ENCODE measurements at regions of chr1 and their contacts with region 1.

Region 1: DNA sequence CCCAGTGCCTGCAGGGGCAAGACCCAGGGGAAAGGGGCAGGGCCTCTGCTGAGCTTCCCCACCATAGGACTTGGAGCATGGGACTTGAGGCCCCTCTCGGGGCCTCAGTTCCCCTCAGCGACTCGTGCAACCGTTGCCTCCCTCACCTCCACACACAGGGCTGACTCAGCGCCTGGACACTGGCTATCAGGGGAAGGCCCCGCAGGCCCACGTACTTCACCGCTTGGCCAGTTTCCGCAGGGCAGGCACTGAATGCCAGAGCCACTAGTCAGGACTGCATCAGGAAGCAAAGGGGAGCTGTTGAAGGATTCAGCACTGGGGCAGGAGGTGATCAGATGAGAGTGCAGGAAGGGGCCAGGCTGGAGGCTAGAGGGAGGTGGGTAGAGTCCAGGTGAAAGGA is 15.5 kb upstream of the FAM131C start:
- DNase-seq: no peak
- ATAC-seq: no peak
- H3K4me3 ChIP-seq: no peak overlapping the region
- H3K27ac ChIP-seq: peak overlapping the region in 4 of 12 donors; percentile 28 to 42 (median 32)
- H3K4me1 ChIP-seq: peaks cover 0 to 26% (median 12%) of the 10 kb centered on the region in 12 donors
- H3K27me3 ChIP-seq: no peaks in the 10 kb centered on the region
- CTCF ChIP-seq: no peak
- POLR2A ChIP-seq: no peak

Region 2: GRCh38 chr1:16122916-16123315 is 33.9 kb after region 1 on chr1:
- intact Hi-C with region 1: loop called in 2 of 10 experiments (anchors 5 kb)
- DNase-seq: peak in 1 of 5 donors; percentile 11
- ATAC-seq: no peak
- H3K4me3 ChIP-seq: no peak overlapping the region
- H3K27ac ChIP-seq: no peak overlapping the region
- H3K4me1 ChIP-seq: peaks cover 0 to 22% (median 10%) of the 10 kb centered on the region in 12 donors
- H3K27me3 ChIP-seq: no peaks in the 10 kb centered on the region
- CTCF ChIP-seq: no peak
- POLR2A ChIP-seq: no peak

Region 3: DNA sequence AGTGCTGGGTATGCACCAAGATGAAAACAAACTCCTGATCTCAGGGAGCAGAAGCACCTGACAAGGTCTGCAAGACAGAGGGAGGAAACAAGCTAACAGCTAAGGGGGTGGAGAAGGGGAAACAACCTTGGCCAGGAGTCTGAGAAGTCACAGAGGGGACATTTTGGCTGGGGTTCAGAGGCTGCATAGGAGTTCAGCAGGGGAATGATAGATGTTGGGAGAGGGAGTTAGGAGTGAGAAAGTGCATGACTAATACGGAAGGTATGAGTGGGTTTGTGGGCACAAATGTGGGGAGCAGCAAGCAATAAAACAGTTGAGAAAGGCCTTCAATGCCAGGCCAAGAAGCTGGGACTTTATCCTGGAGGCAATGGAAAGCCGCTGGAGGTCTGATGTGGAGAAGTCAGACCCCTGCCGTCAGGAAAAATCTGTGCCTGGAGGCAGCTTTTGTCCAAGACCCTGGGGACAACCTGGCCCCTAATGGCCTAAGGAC is 50.5 kb after region 1 on chr1:
- intact Hi-C with region 1: loop called in 1 of 10 experiments (anchors 5 kb)
- DNase-seq: no peak
- ATAC-seq: no peak
- H3K4me3 ChIP-seq: no peak overlapping the region
- H3K27ac ChIP-seq: peak overlapping the region in 11 of 12 donors; percentile 60 to 95 (median 82)
- H3K4me1 ChIP-seq: peaks cover 21 to 59% (median 53%) of the 10 kb centered on the region in 12 donors
- H3K27me3 ChIP-seq: no peaks in the 10 kb centered on the region
- CTCF ChIP-seq: no peak
- POLR2A ChIP-seq: no peak

Measured in heart left ventricle (tissue), 16 donors.